ENCODE measurements at regions of chr3 and their contacts with region 1.

Region 1: GRCh38 chr3:102536456-102536855 is 101.6 kb downstream of the ZPLD1 start:
- DNase-seq: peak in 1 of 6 donors; percentile 12
- ATAC-seq: peak; percentile 61 to 88 (median 84)
- H3K4me3 ChIP-seq: no peak overlapping the region
- H3K27ac ChIP-seq: no peak overlapping the region
- H3K4me1 ChIP-seq: peaks cover 0 to 5% (median 0%) of the 10 kb centered on the region in 3 donors
- H3K27me3 ChIP-seq: no peaks in the 10 kb centered on the region
- CTCF ChIP-seq: peak in 1 of 4 donors; percentile 15

Region 2: DNA sequence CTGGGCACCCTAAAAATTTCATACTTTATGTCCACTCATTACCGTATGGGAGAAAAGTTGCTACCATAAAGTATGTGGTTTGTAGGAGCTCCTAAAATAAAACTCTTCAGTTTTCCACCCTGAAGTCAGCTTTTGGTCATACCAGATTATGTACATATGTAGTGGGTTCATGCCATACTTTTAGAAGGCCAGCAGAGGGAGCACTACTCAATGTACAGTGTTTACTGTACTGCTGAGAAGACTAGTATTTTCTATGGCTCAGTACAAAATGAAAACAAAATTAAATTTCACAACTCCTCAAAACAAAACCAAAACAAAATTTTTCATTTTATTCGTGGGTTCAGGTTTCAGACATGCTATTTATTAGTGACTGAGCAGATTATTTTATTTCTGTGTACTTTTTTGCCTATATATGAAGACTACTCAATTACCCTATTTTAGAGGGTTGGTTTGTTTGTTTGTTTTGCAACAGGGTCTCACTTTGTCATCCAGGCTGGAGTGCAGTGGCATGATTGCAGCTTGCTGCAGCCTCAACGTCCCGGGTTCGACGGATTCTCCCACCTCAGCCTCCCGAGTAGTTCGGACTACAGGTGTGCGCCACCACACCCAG is 733.2 kb before region 1 on chr3:
- intact Hi-C with region 1: loop called in 2 of 3 experiments (anchors 5 to 10 kb)
- DNase-seq: peak in 3 of 6 donors; percentile 21 to 49 (median 49)
- ATAC-seq: peak; percentile 93 to 100 (median 98)
- H3K4me3 ChIP-seq: no peak overlapping the region
- H3K27ac ChIP-seq: no peak overlapping the region
- H3K4me1 ChIP-seq: no peaks in the 10 kb centered on the region
- H3K27me3 ChIP-seq: no peaks in the 10 kb centered on the region
- CTCF ChIP-seq: peak; percentile 62 to 86 (median 78)

Region 3: GRCh38 chr3:101809178-101810021 is 727.1 kb before region 1 on chr3:
- intact Hi-C with region 1: loop called in 2 of 3 experiments (anchors 5 to 10 kb)
- DNase-seq: peak in 2 of 6 donors; percentile 27 to 32
- ATAC-seq: peak in 3 of 4 donors; percentile 75 to 86 (median 79)
- H3K4me3 ChIP-seq: no peak overlapping the region
- H3K27ac ChIP-seq: no peak overlapping the region
- H3K4me1 ChIP-seq: peaks cover 4 to 16% (median 14%) of the 10 kb centered on the region in 3 donors
- H3K27me3 ChIP-seq: no peaks in the 10 kb centered on the region
- CTCF ChIP-seq: peak; percentile 39 to 64 (median 50)

Region 4: DNA sequence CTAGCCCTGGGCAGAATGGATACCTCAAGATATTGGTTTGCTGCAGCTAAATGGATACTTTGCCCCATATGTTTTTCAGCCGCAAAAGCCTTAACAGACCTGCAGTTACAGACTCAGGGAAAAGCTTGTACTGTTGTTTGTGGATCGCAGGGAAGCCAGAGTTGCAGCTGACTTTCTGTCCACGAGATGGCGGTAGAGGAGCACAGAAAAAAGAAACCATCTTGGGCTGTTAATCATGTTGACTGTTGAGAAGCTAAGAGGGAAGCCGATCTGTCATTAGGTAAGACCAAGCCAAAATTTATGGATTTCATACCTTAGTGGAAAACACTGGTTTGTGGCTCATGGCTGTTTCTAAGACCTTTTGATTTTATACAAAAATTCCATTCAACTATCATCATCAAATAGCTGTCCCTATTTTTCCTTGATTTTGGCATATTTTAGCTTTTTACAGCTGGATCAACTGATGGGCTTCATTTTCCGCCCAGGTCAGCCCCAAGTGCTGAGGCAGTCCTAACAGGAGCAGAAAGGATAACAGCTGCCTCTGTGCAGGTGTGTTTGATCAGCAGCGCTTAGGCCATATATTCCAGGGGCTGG is 307.3 kb before region 1 on chr3:
- intact Hi-C with region 1: loop called in 2 of 3 experiments (anchors 5 kb)
- DNase-seq: peak; percentile 50 to 87 (median 58)
- ATAC-seq: peak; percentile 74 to 88 (median 86)
- H3K4me3 ChIP-seq: no peak overlapping the region
- H3K27ac ChIP-seq: no peak overlapping the region
- H3K4me1 ChIP-seq: peaks cover 0 to 9% (median 6%) of the 10 kb centered on the region in 3 donors
- H3K27me3 ChIP-seq: no peaks in the 10 kb centered on the region
- CTCF ChIP-seq: peak; percentile 89 to 92 (median 92)